Posterior cingulate gyrus (tissue), 11 donors: ENCODE measurements at regions of chr3 and their contacts with region 1.

Region 1: GRCh38 chr3:50611464-50612233 is at the start of gene CISH:
- DNase-seq: peak; percentile 61 to 96 (median 77)

Region 2: GRCh38 chr3:50350527-50351322 is 260.9 kb before region 1 on chr3 and contains the starts of genes CYB561D2 and NPRL2:
- intact Hi-C with region 1: loop called (anchors 5 kb)
- DNase-seq: peak; percentile 99 to 100 (median 99)

Region 3: GRCh38 chr3:50519471-50520089 is 92.1 kb before region 1 on chr3:
- intact Hi-C with region 1: loop called (anchors 5 kb)
- DNase-seq: peak; percentile 22 to 94 (median 67)

Region 4: DNA sequence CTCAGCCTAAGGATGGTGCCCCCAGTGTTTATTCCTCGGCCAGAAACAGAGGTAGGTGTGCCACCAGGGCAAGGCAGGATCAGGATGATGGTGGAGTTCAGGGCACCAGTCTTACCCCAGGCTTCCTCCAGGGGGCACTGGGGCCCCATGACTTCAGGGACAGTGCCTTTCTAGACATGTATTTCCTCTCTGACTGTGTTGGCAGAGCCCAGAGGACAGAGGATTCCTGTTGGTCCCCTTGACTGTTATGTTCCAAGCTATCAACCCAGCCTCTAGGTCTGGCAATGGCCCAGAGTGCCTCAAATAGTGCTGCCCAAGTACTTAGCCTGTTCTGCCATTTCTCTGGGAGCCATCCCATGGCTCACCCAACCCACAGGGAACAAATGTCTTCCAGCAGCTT is 39.5 kb before region 1 on chr3:
- intact Hi-C with region 1: loop called (anchors 1 kb)
- DNase-seq: peak; percentile 43 to 96 (median 70)

Region 5: GRCh38 chr3:50652709-50653108 is 41.1 kb after region 1 on chr3:
- intact Hi-C with region 1: loop called (anchors 5 kb)
- DNase-seq: peak in 4 of 10 donors; percentile 24 to 87 (median 34)

Region 6: GRCh38 chr3:51371943-51372557 is 760.4 kb after region 1 on chr3:
- intact Hi-C with region 1: loop called (anchors 5 kb)
- DNase-seq: peak in 3 of 10 donors; percentile 44 to 61 (median 46)